ENCODE measurements at regions of chr9 and their contacts with region 1.

Region 1: GRCh38 chr9:17116400-17116837 is 18.4 kb upstream of the CNTLN start:
- DNase-seq: no peak
- H3K4me3 ChIP-seq: no peak overlapping the region
- H3K27ac ChIP-seq: no peak overlapping the region
- H3K4me1 ChIP-seq: peaks cover 0 to 13% (median 0%) of the 10 kb centered on the region in 3 donors
- H3K27me3 ChIP-seq: no peaks in the 10 kb centered on the region
- CTCF ChIP-seq: peak in 5 of 6 experiments; percentile 24 to 56 (median 41)
- POLR2A ChIP-seq: no peak

Region 2: DNA sequence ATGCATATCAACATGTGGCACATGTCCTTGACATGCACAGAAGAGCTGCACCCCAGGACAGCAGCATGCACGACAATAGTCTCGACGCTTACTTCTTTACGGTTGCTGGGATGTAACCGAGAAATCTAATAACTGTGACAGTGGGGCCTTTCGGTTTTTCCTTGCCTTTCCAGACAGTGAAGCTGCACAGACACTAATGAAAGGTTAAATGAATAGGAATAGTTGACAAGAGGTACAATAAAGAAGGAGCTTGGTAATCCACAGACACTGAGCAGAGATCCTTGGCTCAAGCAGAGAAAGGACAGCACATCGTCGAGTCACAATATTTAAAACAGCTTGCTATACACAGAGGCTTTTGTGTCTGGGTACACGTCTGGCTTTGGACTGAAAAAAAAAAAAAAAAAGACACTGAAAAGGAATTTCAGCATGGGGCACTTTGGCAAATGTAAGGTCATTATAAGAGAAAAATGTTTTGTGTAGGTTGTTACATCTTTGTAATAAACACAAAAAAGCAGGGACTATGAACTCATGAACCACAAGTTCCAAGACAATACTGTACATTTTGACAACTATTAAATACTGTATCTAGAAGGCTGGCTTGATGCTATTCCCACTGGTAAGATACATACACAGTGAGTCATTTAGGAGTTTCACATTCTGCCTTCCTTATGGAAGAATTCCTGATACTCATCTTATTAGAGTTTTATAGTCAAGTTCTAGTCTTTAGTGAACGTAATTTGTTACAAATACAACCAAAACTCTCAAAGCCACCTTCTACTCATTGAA is 251.6 kb before region 1 on chr9:
- intact Hi-C with region 1: no loop called
- DNase-seq: no peak
- H3K4me3 ChIP-seq: peak overlapping the region in 1 of 4 donors; percentile 18
- H3K27ac ChIP-seq: peak overlapping the region in 3 of 4 donors; percentile 36 to 93 (median 90)
- H3K4me1 ChIP-seq: peaks cover 0 to 72% (median 0%) of the 10 kb centered on the region in 3 donors
- H3K27me3 ChIP-seq: peaks cover 0 to 6% (median 0%) of the 10 kb centered on the region in 4 donors
- CTCF ChIP-seq: no peak
- POLR2A ChIP-seq: no peak

Region 3: DNA sequence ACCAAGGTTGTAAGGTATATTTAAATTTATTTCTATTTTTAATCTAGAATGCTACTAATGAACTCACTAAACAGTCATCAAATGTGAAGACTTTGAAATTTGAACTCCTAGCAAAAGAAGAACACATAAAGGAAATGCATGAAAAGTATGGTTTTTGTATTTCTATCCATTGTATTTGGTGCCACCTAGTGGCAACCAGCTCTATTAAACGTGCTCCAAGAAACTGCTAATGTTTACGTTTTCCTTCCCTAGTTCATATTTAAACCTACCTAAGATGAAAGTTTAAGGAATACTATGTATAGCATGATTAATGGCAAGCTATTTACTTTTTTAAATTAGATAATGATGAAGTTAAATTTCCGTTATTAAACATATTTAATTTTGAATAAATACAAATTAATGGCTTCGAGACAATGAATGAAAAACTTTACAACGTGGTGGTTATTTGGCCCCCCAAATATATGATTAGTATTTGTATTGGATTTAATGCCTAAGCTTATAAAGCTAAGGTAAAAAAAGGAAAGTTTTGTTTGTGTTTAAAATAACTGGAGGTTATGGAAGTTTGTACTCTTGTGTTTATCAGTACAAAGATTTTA is 346.5 kb after region 1 on chr9:
- intact Hi-C with region 1: loop called (anchors 10 kb)
- DNase-seq: no peak
- H3K4me3 ChIP-seq: no peak overlapping the region
- H3K27ac ChIP-seq: no peak overlapping the region
- H3K4me1 ChIP-seq: no peaks in the 10 kb centered on the region
- H3K27me3 ChIP-seq: no peaks in the 10 kb centered on the region
- CTCF ChIP-seq: peak; percentile 59 to 73 (median 64)
- POLR2A ChIP-seq: no peak